ENCODE measurements at regions of chr1 and their contacts with region 1.

Region 1: DNA sequence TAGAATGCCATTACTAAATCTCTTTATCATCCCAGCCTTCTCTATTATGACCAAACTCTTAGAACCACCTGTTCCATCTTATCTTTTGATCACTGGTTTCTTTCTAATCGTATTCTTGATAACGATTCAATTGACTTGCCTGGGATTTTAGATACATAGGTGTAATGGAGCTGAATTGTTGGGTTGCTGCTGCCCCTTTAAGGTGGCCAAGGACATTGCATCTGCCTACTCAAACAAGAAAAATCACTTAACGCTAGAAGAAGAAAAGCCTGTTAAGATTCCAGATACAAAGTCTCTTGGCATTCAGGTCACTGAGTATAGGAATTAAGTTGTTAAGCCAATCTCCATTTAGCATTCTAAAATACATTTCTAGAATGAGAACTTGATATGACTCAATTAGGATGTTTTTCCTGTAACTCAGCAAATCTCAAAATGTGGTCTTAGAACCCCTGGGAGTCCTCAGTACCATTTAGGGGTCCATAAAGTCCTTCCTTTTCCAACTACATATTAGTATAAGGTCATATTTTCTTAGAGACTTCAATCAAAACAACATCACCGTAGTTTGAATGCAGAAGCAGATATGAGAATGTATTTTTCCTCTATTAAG is 12.4 kb downstream of the NEXN start:
- DNase-seq: peak; percentile 28 to 42
- H3K4me3 ChIP-seq: no peak overlapping the region
- H3K4me3 Mint-ChIP-seq: no peak overlapping the region
- H3K27ac Mint-ChIP-seq: no peak overlapping the region
- H3K4me1 ChIP-seq: no peaks in the 10 kb centered on the region
- H3K4me1 Mint-ChIP-seq: no peaks in the 10 kb centered on the region
- H3K27me3 ChIP-seq: no peaks in the 10 kb centered on the region
- H3K27me3 Mint-ChIP-seq: no peaks in the 10 kb centered on the region
- CTCF ChIP-seq: peak; percentile 31 to 59

Region 2: GRCh38 chr1:77438236-77438913 is 462.4 kb before region 1 on chr1:
- CTCF ChIA-PET with region 1: no interaction called
- POLR2A ChIA-PET with region 1: no interaction called
- intact Hi-C with region 1: no loop called
- DNase-seq: no peak
- H3K4me3 ChIP-seq: no peak overlapping the region
- H3K4me3 Mint-ChIP-seq: no peak overlapping the region
- H3K27ac Mint-ChIP-seq: no peak overlapping the region
- H3K4me1 ChIP-seq: no peaks in the 10 kb centered on the region
- H3K4me1 Mint-ChIP-seq: no peaks in the 10 kb centered on the region
- H3K27me3 ChIP-seq: no peaks in the 10 kb centered on the region
- H3K27me3 Mint-ChIP-seq: no peaks in the 10 kb centered on the region
- CTCF ChIP-seq: no peak

Region 3: GRCh38 chr1:77683160-77684148 is 217.3 kb before region 1 on chr1:
- CTCF ChIA-PET with region 1: no interaction called
- POLR2A ChIA-PET with region 1: no interaction called
- intact Hi-C with region 1: loop called (anchors 10 kb)
- DNase-seq: peak; percentile 91 to 92
- H3K4me3 ChIP-seq: peak overlapping the region; percentile 87
- H3K4me3 Mint-ChIP-seq: peak overlapping the region; percentile 88
- H3K27ac Mint-ChIP-seq: peak overlapping the region; percentile 96
- H3K4me1 ChIP-seq: peaks cover 23% of the 10 kb centered on the region
- H3K4me1 Mint-ChIP-seq: peaks cover 12% of the 10 kb centered on the region
- H3K27me3 ChIP-seq: no peaks in the 10 kb centered on the region
- H3K27me3 Mint-ChIP-seq: no peaks in the 10 kb centered on the region
- CTCF ChIP-seq: peak; percentile 45 to 66

Region 4: DNA sequence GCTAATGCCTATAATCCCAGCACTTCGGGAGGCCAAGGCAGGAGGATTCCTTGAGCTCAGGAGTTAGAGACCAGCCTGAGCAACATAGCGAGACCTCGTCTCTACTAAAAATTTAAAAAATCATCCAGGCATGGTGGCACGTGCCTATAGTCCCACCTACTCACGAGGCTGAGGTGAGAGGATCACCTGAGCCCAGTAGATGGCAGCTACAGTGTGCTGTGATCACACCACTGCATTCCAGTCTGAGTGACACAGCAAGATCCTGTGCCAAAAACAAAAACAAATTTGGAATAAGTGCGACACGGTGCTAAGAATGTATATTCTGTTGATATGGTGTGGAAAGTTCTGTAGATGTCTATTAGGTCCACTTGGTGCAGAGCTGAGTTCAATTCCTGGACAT is 156.2 kb before region 1 on chr1:
- CTCF ChIA-PET with region 1: no interaction called
- POLR2A ChIA-PET with region 1: no interaction called
- intact Hi-C with region 1: loop called (anchors 10 kb)
- DNase-seq: peak in 1 of 2 experiments; percentile 19
- H3K4me3 ChIP-seq: no peak overlapping the region
- H3K4me3 Mint-ChIP-seq: no peak overlapping the region
- H3K27ac Mint-ChIP-seq: no peak overlapping the region
- H3K4me1 ChIP-seq: peaks cover 3% of the 10 kb centered on the region; the same call in 1 of the 2 replicates
- H3K4me1 Mint-ChIP-seq: peaks cover 7% of the 10 kb centered on the region
- H3K27me3 ChIP-seq: no peaks in the 10 kb centered on the region
- H3K27me3 Mint-ChIP-seq: no peaks in the 10 kb centered on the region
- CTCF ChIP-seq: no peak

Region 5: DNA sequence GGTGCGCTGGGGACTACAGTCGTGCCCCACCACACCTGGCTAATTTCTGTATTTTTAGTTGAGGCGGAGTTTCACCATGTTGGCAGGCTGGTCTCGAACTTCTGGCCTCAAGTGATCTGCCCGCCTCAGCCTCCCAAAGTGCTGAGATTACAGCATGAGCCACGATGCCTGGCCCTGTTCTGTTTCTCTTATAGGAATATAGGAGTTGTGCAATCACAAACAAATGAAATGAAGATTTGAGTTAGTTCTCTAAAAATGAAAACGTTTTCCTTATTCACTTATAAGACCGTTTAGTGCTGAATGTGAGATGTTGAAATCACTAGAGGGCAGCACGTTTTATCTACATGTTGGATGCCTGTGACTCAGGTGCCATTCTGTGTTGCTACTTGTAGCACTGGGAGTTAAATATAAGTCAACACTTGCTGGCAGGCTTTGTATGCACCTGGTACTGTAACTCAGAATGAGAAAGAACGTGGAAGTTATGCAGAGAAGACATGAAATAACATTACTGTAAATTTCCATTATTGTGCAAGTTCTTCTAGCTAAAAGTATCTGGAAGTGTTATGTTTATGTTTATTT is 75.6 kb before region 1 on chr1:
- CTCF ChIA-PET with region 1: no interaction called
- POLR2A ChIA-PET with region 1: no interaction called
- intact Hi-C with region 1: loop called (anchors 1 kb)
- DNase-seq: peak; percentile 5 to 32
- H3K4me3 ChIP-seq: no peak overlapping the region
- H3K4me3 Mint-ChIP-seq: no peak overlapping the region
- H3K27ac Mint-ChIP-seq: no peak overlapping the region
- H3K4me1 ChIP-seq: no peaks in the 10 kb centered on the region
- H3K4me1 Mint-ChIP-seq: no peaks in the 10 kb centered on the region
- H3K27me3 ChIP-seq: no peaks in the 10 kb centered on the region
- H3K27me3 Mint-ChIP-seq: no peaks in the 10 kb centered on the region
- CTCF ChIP-seq: no peak

Region 6: DNA sequence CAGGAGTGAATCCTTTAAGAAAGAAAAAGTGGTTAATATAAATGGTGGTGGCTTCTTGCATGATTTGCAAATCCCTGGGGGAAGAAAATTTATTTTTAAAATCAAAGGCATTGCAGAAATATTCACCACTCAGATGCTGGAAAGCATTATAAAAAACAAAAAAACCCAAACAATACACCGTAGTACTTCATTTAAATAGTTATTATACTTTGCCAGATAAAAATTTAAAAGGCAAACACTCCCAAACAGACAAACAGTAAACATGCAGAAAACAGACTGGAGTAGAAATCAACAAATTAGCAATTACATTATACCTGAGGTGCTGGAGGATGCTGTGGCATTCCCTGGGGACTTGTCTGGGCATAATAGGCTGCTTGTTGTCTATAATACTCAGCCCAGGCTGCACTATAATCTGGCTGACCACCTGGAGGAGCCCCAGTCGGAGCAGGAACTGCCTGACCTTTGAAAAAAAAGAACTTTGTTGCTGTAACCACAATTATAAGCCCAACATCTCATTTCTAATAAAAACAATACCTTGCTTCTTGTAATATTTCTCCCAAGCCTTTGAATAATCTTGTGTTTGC is 48.1 kb after region 1 on chr1:
- CTCF ChIA-PET with region 1: no interaction called
- POLR2A ChIA-PET with region 1: no interaction called
- intact Hi-C with region 1: no loop called
- DNase-seq: peak in 1 of 2 experiments; percentile 7
- H3K4me3 ChIP-seq: no peak overlapping the region
- H3K4me3 Mint-ChIP-seq: no peak overlapping the region
- H3K27ac Mint-ChIP-seq: no peak overlapping the region
- H3K4me1 ChIP-seq: no peaks in the 10 kb centered on the region
- H3K4me1 Mint-ChIP-seq: no peaks in the 10 kb centered on the region
- H3K27me3 ChIP-seq: no peaks in the 10 kb centered on the region
- H3K27me3 Mint-ChIP-seq: no peaks in the 10 kb centered on the region
- CTCF ChIP-seq: no peak

Region 7: DNA sequence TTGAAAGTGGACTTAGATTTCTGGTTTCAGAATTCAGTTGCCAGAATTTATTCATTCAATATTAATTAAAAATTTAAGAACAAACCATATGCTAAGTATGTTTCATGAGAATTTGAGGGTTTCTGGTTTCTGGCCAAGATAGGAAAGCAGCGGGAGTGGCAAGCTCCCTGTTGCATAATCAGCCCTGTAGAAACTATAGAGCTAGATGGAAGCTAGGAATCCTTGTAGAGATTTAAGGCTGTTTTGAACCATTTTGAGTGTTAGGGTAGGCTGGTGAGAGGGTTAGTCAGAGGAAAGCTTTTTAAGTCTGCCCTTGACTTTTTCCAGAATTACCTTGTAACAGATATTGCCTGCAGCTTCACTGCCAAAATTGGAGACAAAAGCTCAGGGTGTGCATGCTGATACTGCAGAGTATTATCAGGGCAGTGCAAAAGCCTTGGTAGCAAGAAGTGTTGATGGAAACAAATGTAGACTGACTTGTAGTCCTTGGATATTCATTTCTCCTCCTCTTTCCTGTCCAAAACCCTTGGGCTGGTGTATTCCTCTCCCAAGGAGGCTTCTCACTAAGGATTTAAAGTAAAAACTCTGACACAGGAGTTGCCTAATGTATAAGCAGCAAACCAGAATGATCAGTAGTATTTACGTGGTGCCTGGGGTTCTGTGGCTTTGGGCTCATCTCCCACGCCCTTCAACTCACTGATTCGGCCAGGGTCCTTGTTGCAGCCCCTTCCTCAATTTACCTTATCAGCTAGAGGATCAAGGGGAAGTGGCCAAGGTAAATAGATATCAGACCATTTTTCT is 132.4 kb after region 1 on chr1:
- CTCF ChIA-PET with region 1: no interaction called
- POLR2A ChIA-PET with region 1: no interaction called
- intact Hi-C with region 1: no loop called
- DNase-seq: no peak
- H3K4me3 ChIP-seq: no peak overlapping the region
- H3K4me3 Mint-ChIP-seq: no peak overlapping the region
- H3K27ac Mint-ChIP-seq: no peak overlapping the region
- H3K4me1 ChIP-seq: no peaks in the 10 kb centered on the region
- H3K4me1 Mint-ChIP-seq: no peaks in the 10 kb centered on the region
- H3K27me3 ChIP-seq: no peaks in the 10 kb centered on the region
- H3K27me3 Mint-ChIP-seq: peaks cover 2% of the 10 kb centered on the region
- CTCF ChIP-seq: no peak